Breast epithelium (tissue), 4 donors: ENCODE measurements at regions of chr14 and their contacts with region 1.

Region 1: GRCh38 chr14:85528080-85528896 is 1.7 kb upstream of the FLRT2 start:
- DNase-seq: no peak
- H3K4me3 ChIP-seq: peak overlapping the region; percentile 62 to 80 (median 66)
- H3K27ac ChIP-seq: peak overlapping the region; percentile 52 to 86
- H3K4me1 ChIP-seq: no peaks in the 10 kb centered on the region
- H3K27me3 ChIP-seq: peaks cover 0 to 35% of the 10 kb centered on the region in 2 donors
- CTCF ChIP-seq: no peak
- POLR2A ChIP-seq: no peak

Region 2: DNA sequence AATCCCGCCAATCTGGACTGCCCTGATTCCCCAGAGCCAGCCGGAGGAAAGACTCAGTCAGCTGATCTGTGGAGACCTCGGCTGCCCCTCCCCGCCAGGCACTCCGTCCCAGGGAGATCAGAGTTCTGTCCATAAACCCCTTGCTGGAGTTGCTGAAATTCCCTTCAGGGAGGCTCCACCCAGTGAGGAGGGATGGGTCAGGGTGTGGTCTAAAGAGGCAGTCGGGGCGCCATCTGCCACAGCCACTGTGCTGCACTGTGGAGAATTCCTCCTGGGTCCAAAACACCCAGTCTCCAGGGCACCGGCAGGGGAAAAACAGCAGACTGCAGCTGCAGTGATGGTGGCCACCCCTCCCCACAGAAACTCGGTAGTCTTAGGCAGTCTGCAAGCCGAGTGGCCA is 1920.6 kb before region 1 on chr14:
- intact Hi-C with region 1: loop called (anchors 5 kb)
- DNase-seq: no peak
- H3K4me3 ChIP-seq: no peak overlapping the region
- H3K27ac ChIP-seq: no peak overlapping the region
- H3K4me1 ChIP-seq: no peaks in the 10 kb centered on the region
- H3K27me3 ChIP-seq: no peaks in the 10 kb centered on the region
- CTCF ChIP-seq: no peak
- POLR2A ChIP-seq: no peak

Region 3: GRCh38 chr14:83974647-83975163 is 1553.6 kb before region 1 on chr14:
- intact Hi-C with region 1: loop called (anchors 5 kb)
- DNase-seq: no peak
- H3K4me3 ChIP-seq: no peak overlapping the region
- H3K27ac ChIP-seq: no peak overlapping the region
- H3K4me1 ChIP-seq: no peaks in the 10 kb centered on the region
- H3K27me3 ChIP-seq: no peaks in the 10 kb centered on the region
- CTCF ChIP-seq: no peak
- POLR2A ChIP-seq: no peak